CD8-positive, alpha-beta T cell (primary cell): ENCODE measurements at regions of chr11 and their contacts with region 1.

Region 1: GRCh38 chr11:45917623-45918330 is at the start of gene PEX16:
- DNase-seq: peak; percentile 90 to 99 (median 94)
- ATAC-seq: peak; percentile 90
- H3K4me3 ChIP-seq: peak within 1 kb of the TSS; percentile 94 to 98
- H3K4me3 Mint-ChIP-seq: peak within 1 kb of the TSS; percentile 91
- H3K27ac ChIP-seq: peak within 1 kb of the TSS; percentile 91 to 94
- H3K27ac Mint-ChIP-seq: peak within 1 kb of the TSS; percentile 96
- H3K4me1 ChIP-seq: peaks cover 26% of the 10 kb centered on the region
- H3K4me1 Mint-ChIP-seq: peaks cover 49% of the 10 kb centered on the region
- H3K27me3 ChIP-seq: no peaks in the 10 kb centered on the region
- H3K27me3 Mint-ChIP-seq: peaks cover 2% of the 10 kb centered on the region
- CTCF ChIP-seq: no peak
- total RNA-seq, gene PEX16: 51.5 to 55.6 TPM

Region 2: GRCh38 chr11:44065841-44066731 is 1851.7 kb before region 1 on chr11 and contains the start of gene ACCS:
- CTCF ChIA-PET with region 1: no interaction called
- POLR2A ChIA-PET with region 1: no interaction called
- intact Hi-C with region 1: loop called in 1 of 2 experiments (anchors 10 kb)
- DNase-seq: peak; percentile 80 to 96 (median 93)
- ATAC-seq: peak; percentile 96
- H3K4me3 ChIP-seq: peak within 1 kb of the TSS; percentile 80 to 83
- H3K4me3 Mint-ChIP-seq: peak within 1 kb of the TSS; percentile 91
- H3K27ac ChIP-seq: peak within 1 kb of the TSS; percentile 70 to 71
- H3K27ac Mint-ChIP-seq: peak within 1 kb of the TSS; percentile 92
- H3K4me1 ChIP-seq: peaks cover 6% of the 10 kb centered on the region
- H3K4me1 Mint-ChIP-seq: peaks cover 30% of the 10 kb centered on the region
- H3K27me3 ChIP-seq: no peaks in the 10 kb centered on the region
- H3K27me3 Mint-ChIP-seq: no peaks in the 10 kb centered on the region
- CTCF ChIP-seq: peak; percentile 83
- total RNA-seq, gene ACCS: 16.7 to 18.1 TPM

Region 3: GRCh38 chr11:45804761-45805304 is 112.9 kb before region 1 on chr11 and contains the start of gene SLC35C1:
- CTCF ChIA-PET with region 1: no interaction called
- POLR2A ChIA-PET with region 1: interaction called, 3 read pairs
- intact Hi-C with region 1: loop called (anchors 1 kb)
- DNase-seq: peak; percentile 89 to 98 (median 97)
- ATAC-seq: peak; percentile 96
- H3K4me3 ChIP-seq: peak within 1 kb of the TSS; percentile 97
- H3K4me3 Mint-ChIP-seq: peak within 1 kb of the TSS; percentile 90
- H3K27ac ChIP-seq: peak within 1 kb of the TSS; percentile 76 to 81
- H3K27ac Mint-ChIP-seq: peak within 1 kb of the TSS; percentile 81
- H3K4me1 ChIP-seq: peaks cover 32% of the 10 kb centered on the region
- H3K4me1 Mint-ChIP-seq: peaks cover 44% of the 10 kb centered on the region
- H3K27me3 ChIP-seq: no peaks in the 10 kb centered on the region
- H3K27me3 Mint-ChIP-seq: no peaks in the 10 kb centered on the region
- CTCF ChIP-seq: no peak
- total RNA-seq, gene SLC35C1: 3.1 to 3.3 TPM

Region 4: DNA sequence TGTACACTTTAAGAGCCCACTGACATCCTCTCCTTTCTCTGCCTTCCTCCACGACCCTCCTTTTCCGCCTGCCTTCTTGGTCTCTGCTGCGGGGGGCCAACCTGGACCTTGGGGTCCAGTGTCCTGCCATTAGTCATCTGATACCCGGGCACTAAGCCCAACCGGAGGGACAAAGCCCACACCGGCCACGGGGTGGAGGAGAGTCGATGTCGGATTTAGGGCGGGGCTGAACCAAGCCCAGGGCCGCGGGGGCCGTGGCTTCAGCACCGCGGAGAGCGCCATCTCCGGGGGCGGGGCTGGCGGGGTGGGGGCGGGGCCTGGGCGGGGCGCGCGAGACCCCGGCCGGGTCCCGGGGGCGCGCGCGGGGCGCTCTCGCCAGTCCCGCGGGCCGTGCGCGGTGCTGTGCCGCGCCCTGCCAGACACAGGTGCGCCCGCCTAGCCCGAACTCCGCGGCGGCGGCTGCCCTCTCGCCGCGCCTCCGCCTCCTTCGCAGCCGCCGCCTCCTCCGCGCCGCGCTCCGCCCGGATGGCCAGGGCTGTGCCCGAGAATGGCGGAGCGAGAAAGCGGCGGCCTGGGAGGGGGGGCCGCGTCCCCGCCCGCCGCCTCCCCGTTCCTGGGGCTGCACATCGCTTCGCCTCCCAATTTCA is 32.4 kb before region 1 on chr11 and contains the start of gene MAPK8IP1:
- CTCF ChIA-PET with region 1: no interaction called
- POLR2A ChIA-PET with region 1: no interaction called
- intact Hi-C with region 1: loop called (anchors 1 kb)
- DNase-seq: peak; percentile 14 to 76 (median 52)
- ATAC-seq: peak; percentile 85
- H3K4me3 ChIP-seq: peak within 1 kb of the TSS in 1 of 2 experiments; percentile 24
- H3K4me3 Mint-ChIP-seq: peak within 1 kb of the TSS; percentile 61
- H3K27ac ChIP-seq: no peak within 1 kb of the TSS
- H3K27ac Mint-ChIP-seq: no peak within 1 kb of the TSS
- H3K4me1 ChIP-seq: peaks cover 5% of the 10 kb centered on the region
- H3K4me1 Mint-ChIP-seq: peaks cover 10% of the 10 kb centered on the region
- H3K27me3 ChIP-seq: peaks cover 0 to 9% of the 10 kb centered on the region in 2 experiments
- H3K27me3 Mint-ChIP-seq: peaks cover 2% of the 10 kb centered on the region
- CTCF ChIP-seq: no peak
- total RNA-seq, gene MAPK8IP1: 6.5 to 8.4 TPM

Region 5: DNA sequence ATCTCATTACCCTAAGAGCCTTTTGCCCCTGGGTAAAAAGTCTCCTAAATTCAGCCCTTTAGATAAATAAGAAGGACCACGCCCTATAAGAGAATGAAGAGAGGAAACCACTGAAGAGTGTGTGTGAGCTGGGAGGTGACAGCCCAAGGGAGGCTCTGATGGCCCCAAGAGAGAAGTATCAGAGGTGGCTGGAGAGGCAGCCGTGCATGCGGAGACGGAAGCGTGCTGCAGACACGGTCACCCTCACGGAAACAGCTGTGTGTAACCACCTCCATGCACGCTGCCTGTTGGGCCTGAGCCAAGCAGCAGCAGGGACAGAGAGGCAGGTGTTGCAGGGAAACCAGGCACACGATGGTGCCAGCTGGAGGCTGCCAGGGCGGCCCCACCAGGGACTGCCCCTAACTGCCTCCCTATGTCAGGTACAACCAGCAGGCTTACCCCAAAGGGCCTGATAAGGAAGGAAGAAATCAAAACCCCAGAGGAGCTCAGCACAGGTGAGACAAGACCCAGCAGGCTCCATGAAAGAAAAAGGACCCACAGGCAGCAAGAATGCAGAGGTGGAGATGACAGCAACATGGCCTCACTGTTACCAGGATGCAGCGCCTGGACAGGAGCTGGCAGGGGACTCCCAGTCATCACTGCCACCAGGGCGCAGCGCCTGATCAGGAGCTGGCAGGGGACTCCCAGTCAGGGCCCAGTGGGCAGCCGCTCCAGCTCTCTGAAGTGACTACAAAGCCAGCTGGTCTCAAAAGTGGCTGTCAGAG is 12.4 kb after region 1 on chr11:
- CTCF ChIA-PET with region 1: interaction called, 7 read pairs
- POLR2A ChIA-PET with region 1: interaction called, 21 read pairs
- intact Hi-C with region 1: no loop called
- DNase-seq: peak in 7 of 9 experiments; percentile 15 to 74 (median 45)
- ATAC-seq: peak; percentile 80
- H3K4me3 ChIP-seq: peak overlapping the region; percentile 1 to 40
- H3K4me3 Mint-ChIP-seq: peak overlapping the region; percentile 58
- H3K27ac ChIP-seq: peak overlapping the region; percentile 50 to 75
- H3K27ac Mint-ChIP-seq: peak overlapping the region; percentile 91
- H3K4me1 ChIP-seq: peaks cover 31% of the 10 kb centered on the region
- H3K4me1 Mint-ChIP-seq: peaks cover 28% of the 10 kb centered on the region
- H3K27me3 ChIP-seq: no peaks in the 10 kb centered on the region
- H3K27me3 Mint-ChIP-seq: no peaks in the 10 kb centered on the region
- CTCF ChIP-seq: no peak

Region 6: DNA sequence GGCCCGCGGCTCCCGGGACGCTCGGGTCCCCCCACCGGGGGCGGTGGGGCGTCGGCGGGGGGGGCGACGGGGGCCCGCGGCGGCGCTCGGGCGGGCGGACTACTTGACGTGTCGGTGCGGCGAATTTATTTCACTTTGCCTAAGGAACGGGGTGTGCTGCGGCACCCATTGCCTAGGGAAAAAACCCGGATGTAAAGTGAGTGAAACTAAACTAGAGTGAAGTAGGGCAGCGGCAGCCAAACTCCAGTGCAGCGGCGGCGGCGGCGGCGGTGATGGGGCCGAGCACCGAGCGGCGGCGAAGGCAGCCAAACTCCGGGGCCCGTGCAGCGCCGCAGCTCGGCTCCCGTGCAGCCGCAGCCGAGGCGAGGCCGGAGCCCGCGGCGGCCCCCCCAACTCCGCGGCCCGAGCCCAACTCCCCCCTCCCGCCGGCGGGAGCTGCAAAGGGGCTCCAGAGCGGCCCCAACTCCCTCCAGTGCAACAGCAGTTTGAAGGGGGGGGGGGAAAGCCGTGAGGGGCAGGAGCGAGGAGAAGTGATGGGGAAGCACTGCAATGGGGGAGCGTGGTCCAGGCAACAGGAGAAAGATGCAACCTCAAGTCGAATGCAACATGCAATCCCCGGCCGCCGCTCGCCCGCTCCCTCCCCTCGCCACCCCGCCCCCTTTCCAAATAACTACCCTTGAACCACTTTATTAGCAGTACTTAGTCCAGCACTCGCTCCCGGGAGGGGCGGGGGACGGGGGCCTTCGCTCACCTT is 204.1 kb after region 1 on chr11:
- CTCF ChIA-PET with region 1: no interaction called
- POLR2A ChIA-PET with region 1: no interaction called
- intact Hi-C with region 1: loop called in 1 of 2 experiments (anchors 1 kb)
- DNase-seq: peak; percentile 50 to 92 (median 73)
- ATAC-seq: peak; percentile 54
- H3K4me3 ChIP-seq: peak overlapping the region; percentile 58 to 63
- H3K4me3 Mint-ChIP-seq: peak overlapping the region; percentile 88
- H3K27ac ChIP-seq: peak overlapping the region; percentile 1 to 26
- H3K27ac Mint-ChIP-seq: peak overlapping the region; percentile 96
- H3K4me1 ChIP-seq: peaks cover 30% of the 10 kb centered on the region
- H3K4me1 Mint-ChIP-seq: peaks cover 33% of the 10 kb centered on the region
- H3K27me3 ChIP-seq: no peaks in the 10 kb centered on the region
- H3K27me3 Mint-ChIP-seq: no peaks in the 10 kb centered on the region
- CTCF ChIP-seq: no peak

Region 7: GRCh38 chr11:46346886-46347636 is 429.3 kb after region 1 on chr11 and contains the start of gene DGKZ:
- CTCF ChIA-PET with region 1: no interaction called
- POLR2A ChIA-PET with region 1: no interaction called
- intact Hi-C with region 1: loop called (anchors 2 to 5 kb)
- DNase-seq: peak; percentile 83 to 96 (median 87)
- ATAC-seq: peak; percentile 80
- H3K4me3 ChIP-seq: peak within 1 kb of the TSS; percentile 72 to 94
- H3K4me3 Mint-ChIP-seq: peak within 1 kb of the TSS; percentile 90
- H3K27ac ChIP-seq: peak within 1 kb of the TSS; percentile 55 to 68
- H3K27ac Mint-ChIP-seq: peak within 1 kb of the TSS; percentile 90
- H3K4me1 ChIP-seq: peaks cover 72% of the 10 kb centered on the region
- H3K4me1 Mint-ChIP-seq: peaks cover 79% of the 10 kb centered on the region
- H3K27me3 ChIP-seq: no peaks in the 10 kb centered on the region
- H3K27me3 Mint-ChIP-seq: no peaks in the 10 kb centered on the region
- CTCF ChIP-seq: peak; percentile 55
- total RNA-seq, gene DGKZ: 131 to 135 TPM